ENCODE measurements at regions of chr13 and their contacts with region 1.

Region 1: DNA sequence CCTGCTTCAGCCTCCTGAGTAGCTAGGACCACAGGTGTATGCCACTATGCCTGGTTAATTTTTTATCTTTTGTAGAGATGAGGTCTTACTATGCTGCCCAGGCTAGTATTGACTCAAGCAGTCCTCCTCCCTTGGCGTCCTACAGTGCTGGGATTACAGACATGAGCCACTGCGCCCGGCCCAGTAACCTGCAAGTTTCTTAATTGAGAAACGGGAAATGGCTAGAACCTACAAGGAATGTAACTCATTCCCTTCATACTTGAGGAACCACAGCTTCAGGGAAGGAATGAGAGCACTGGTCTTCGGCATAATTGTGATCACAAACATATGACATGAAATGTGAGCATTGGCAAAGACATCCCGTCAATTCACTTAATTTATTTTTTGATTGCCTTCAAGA is 157.0 kb downstream of the KLF5 start:
- DNase-seq: no peak
- H3K4me3 ChIP-seq: no peak overlapping the region
- H3K27ac ChIP-seq: no peak overlapping the region
- H3K4me1 ChIP-seq: peaks cover 0 to 10% of the 10 kb centered on the region in 2 donors
- H3K27me3 ChIP-seq: no peaks in the 10 kb centered on the region
- CTCF ChIP-seq: no peak

Region 2: GRCh38 chr13:73335221-73335620 is 119.4 kb after region 1 on chr13:
- intact Hi-C with region 1: loop called (anchors 10 kb)
- DNase-seq: no peak
- H3K4me3 ChIP-seq: no peak overlapping the region
- H3K27ac ChIP-seq: no peak overlapping the region
- H3K4me1 ChIP-seq: no peaks in the 10 kb centered on the region
- H3K27me3 ChIP-seq: no peaks in the 10 kb centered on the region
- CTCF ChIP-seq: no peak

Measured in ascending aorta (tissue), 2 donors.